MCF 10A (cell line): ENCODE measurements at regions of chr12 and their contacts with region 1.

Region 1: DNA sequence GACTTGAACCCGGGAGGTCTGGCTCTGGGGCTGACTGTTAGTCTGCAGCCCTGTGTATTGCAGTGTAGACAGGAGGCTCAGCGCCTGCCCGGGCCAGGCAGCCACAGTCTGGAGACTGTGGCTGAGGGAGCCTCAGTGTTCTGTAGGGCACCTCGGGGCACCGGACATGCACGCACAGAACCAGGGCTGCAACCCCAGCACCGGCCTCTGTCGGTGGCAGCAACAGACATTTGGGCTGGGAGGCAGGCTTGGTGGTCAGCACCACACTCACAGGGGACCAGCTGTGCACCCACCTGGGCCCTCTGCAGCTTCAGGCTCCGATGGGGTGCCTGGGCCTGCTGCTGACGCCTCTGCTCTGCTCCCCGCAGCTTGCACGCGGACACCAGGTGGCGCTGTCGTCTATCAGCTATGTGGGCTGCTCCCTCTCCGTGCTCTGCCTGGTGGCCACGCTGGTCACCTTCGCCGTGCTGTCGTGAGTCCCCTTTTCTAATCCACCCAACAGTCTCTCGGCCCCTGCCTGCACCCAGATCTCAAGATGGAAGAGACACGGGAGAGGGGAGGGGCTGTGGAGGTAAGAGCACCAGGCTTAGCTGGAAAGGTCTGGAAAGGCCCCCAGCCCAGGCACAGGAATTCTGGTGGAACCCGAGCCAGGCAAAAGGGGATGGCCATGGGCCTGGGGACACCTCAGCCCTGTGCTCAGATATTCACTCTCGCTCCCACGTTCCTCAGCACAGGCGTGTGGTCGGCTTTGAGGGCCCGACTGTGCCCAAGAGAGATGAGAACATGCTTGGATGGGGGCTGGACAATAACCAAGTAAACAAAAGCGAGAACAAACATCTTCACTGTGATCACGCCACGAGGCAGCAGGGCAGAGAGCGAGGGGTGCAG is 151.0 kb downstream of the ADGRD1 start:
- DNase-seq: peak; percentile 72
- H3K4me3 Mint-ChIP-seq: no peak overlapping the region
- H3K27ac Mint-ChIP-seq: no peak overlapping the region
- H3K4me1 Mint-ChIP-seq: no peaks in the 10 kb centered on the region
- H3K27me3 Mint-ChIP-seq: no peaks in the 10 kb centered on the region
- CTCF ChIP-seq: peak; percentile 97

Region 2: DNA sequence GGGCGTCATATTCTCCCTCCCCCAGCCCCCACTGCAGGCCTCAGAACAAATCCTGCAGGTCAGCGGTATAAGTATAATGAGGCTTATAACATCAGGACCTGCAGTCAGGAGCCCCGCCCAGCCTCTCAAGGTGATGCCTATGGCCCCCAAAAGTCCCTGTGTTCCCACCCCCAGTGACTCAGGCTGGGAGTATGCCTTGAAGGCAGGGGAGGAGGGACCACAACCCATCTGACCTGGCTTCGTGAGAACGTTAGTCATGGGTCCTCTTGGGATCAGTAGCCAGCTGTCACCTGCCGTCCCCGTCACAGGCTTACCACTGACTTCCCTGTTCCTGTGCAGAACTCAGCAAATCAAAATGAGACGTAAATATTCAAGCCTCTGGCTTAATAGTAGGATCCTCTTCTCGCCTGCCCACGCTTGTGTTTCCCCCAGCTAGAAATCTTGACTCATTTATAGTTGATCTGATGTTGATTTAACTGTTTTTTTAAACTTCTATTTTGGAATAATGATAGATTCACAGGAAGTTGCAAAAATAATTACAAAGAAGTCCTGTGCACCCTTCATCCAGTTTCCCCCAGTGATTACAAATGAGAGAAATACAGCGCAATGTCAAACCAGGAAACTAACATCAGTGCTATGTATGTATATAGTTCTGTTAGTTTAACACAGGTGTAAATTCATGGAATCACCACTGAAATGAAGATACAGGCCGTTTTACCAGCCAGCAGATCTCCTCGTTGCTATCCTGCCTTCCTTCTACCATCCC is 43.5 kb before region 1 on chr12:
- CTCF ChIA-PET with region 1: no interaction called
- POLR2A ChIA-PET with region 1: no interaction called
- intact Hi-C with region 1: no loop called
- DNase-seq: no peak
- H3K4me3 Mint-ChIP-seq: no peak overlapping the region
- H3K27ac Mint-ChIP-seq: no peak overlapping the region
- H3K4me1 Mint-ChIP-seq: peaks cover 5% of the 10 kb centered on the region
- H3K27me3 Mint-ChIP-seq: peaks cover 89% of the 10 kb centered on the region
- CTCF ChIP-seq: no peak

Region 3: GRCh38 chr12:131116391-131117117 is 11.8 kb after region 1 on chr12:
- CTCF ChIA-PET with region 1: interaction called, 84 read pairs
- POLR2A ChIA-PET with region 1: no interaction called
- intact Hi-C with region 1: no loop called
- DNase-seq: no peak
- H3K4me3 Mint-ChIP-seq: no peak overlapping the region
- H3K27ac Mint-ChIP-seq: no peak overlapping the region
- H3K4me1 Mint-ChIP-seq: peaks cover 14% of the 10 kb centered on the region
- H3K27me3 Mint-ChIP-seq: no peaks in the 10 kb centered on the region
- CTCF ChIP-seq: no peak

Region 4: DNA sequence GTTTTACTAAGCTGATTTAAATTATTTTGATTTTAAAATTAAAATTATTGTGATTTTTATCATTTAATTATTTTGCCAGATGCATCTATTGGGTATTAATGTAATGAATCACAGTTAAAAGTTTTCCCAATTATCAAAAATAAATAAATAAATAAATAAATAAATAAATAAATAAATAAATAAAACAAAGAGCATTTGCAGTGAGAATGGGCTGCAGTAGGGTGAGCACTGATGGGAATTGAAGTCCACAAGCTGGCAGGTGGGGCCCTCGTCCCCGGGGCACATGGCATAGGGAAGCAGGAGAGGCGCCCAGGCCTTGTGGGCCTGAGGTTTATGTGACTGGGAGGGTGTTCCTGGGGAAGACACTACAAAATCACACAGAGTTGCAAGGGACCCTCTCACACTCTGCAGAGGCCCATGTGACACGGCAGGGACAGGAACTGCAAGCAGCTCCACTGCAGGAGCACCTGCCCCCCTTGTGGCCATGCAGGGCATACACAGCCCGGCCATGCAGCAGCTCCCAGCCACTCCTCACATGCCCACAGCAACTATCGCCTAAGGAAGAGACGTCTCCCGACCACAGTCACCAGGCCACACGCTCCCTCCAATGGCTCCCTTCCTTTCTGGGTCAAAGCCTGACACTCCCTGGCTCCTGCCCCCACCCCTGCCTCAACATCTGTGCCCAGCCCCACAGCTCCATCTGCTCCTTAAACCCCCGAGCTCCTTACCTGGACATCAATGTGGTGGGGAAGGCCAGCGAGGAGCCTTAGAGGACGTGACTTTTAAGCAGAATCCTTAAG is 349.9 kb after region 1 on chr12:
- CTCF ChIA-PET with region 1: interaction called, 104 read pairs
- POLR2A ChIA-PET with region 1: interaction called, 6 read pairs
- intact Hi-C with region 1: loop called (anchors 1 kb)
- DNase-seq: peak; percentile 57
- H3K4me3 Mint-ChIP-seq: no peak overlapping the region
- H3K27ac Mint-ChIP-seq: no peak overlapping the region
- H3K4me1 Mint-ChIP-seq: peaks cover 5% of the 10 kb centered on the region
- H3K27me3 Mint-ChIP-seq: peaks cover 44% of the 10 kb centered on the region
- CTCF ChIP-seq: peak; percentile 92

Region 5: DNA sequence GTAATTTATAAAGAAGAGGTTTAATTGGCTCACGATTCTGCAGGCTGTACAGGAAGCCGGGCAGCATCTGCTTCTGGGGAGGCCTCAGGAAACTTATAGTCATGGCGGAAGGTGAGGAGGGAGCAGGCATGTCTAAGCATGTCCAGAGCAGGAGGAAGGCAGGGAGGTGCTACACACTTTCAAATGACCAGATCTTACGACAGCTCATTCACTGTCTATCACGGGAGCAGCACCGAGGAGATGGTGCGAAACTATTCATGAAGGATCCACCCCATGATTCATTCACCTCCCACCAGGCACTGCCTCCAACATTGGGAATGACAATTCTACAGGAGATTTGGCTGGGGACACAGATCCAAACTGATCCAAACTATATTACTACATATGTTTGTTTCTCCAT is 616.2 kb after region 1 on chr12:
- CTCF ChIA-PET with region 1: interaction called, 12 read pairs
- POLR2A ChIA-PET with region 1: no interaction called
- intact Hi-C with region 1: no loop called
- DNase-seq: peak; percentile 74
- H3K4me3 Mint-ChIP-seq: peak overlapping the region; percentile 24
- H3K27ac Mint-ChIP-seq: peak overlapping the region; percentile 98
- H3K4me1 Mint-ChIP-seq: peaks cover 14% of the 10 kb centered on the region
- H3K27me3 Mint-ChIP-seq: no peaks in the 10 kb centered on the region
- CTCF ChIP-seq: no peak